ENCODE measurements at regions of chr9 and their contacts with region 1.

Region 1: DNA sequence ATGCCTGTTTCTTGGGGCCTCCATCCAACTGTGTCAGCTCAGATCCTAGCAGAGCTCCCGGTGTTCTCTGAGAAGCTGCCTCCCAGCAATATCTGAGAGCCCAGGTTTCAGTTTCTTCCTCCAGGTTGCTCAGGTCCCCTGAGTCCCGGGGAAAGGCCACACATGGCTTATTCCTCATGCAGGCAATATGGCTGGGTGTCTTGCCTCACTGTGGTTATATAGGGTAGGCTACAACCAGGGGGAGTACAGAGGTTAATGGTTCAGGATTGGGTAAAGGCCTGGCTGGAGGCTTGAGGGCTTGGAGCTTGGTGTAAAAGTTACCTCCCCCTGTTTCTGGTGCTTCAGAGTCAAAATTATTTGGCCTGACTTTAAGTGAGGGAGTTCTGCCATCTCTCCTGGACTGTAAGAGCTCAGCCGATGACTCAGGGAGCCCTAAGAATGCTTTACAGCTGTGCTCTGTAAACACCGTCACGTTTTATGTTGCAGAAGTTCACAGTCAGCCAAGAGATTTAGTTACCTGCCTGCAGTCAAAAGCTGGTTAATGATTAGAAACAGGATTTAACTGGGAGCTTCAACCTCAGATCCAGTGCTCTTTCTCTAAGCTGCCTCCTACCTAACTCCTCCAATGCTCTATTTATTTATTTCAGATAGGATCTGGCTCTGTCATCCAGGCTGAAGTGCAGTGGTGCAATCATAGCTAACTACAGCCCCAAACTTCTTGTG is 24.3 kb upstream of the UBAP2 start:
- DNase-seq: peak in 1 of 2 experiments; percentile 49
- H3K4me3 ChIP-seq: no peak overlapping the region
- H3K27ac ChIP-seq: peak overlapping the region; percentile 49
- H3K4me1 ChIP-seq: peaks cover 0 to 11% (median 5%) of the 10 kb centered on the region in 4 experiments; a peak in 5 of 7 replicates
- H3K27me3 ChIP-seq: no peaks in the 10 kb centered on the region
- CTCF ChIP-seq: no peak
- EP300 ChIP-seq: no peak
- POLR2A ChIP-seq: no peak
- RAD21 ChIP-seq: no peak

Region 2: DNA sequence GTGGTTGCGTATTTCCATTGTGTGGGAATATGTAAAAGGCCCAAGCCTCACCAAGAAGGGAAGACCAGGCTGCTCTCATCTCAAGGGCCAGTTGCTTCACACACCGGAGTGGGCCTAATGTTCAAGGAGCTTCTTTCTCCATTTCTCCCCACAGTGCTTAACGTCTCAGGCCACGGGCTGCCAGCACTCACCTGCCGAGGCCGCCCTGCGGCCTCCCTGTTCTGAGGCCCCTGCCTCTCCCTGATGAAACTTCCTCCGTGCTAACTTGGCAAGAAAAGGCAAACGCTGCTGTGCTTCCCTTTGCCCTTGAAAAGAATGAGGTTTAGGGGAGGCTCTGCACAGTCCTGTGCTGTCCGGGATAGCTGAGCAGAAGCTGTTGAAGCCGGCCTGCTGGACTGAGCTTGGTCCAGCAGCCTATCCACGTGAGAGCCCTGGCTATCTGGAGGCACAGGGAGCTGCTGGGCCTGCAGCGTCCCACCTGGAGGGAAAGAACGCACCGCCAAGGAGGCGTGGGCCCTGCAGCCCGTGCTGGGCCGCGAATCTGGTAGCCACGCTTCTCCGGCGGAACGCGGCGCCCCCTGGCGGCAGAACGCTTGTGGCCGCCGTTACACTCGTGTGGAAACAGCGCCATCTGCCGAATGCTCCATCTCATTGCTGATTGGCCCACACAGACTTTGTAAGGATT is 351.2 kb before region 1 on chr9:
- CTCF ChIA-PET with region 1: no interaction called
- POLR2A ChIA-PET with region 1: no interaction called
- DNase-seq: peak; percentile 61 to 98
- H3K4me3 ChIP-seq: no peak overlapping the region
- H3K27ac ChIP-seq: no peak overlapping the region
- H3K4me1 ChIP-seq: peaks cover 0 to 1% (median 0%) of the 10 kb centered on the region in 4 experiments; a peak in 2 of 7 replicates
- H3K27me3 ChIP-seq: peaks cover 0 to 5% (median 3%) of the 10 kb centered on the region in 4 experiments; a peak in 3 of 7 replicates
- CTCF ChIP-seq: peak; percentile 97 to 100 (median 100)
- EP300 ChIP-seq: no peak
- POLR2A ChIP-seq: no peak
- RAD21 ChIP-seq: peak; percentile 98

Region 3: DNA sequence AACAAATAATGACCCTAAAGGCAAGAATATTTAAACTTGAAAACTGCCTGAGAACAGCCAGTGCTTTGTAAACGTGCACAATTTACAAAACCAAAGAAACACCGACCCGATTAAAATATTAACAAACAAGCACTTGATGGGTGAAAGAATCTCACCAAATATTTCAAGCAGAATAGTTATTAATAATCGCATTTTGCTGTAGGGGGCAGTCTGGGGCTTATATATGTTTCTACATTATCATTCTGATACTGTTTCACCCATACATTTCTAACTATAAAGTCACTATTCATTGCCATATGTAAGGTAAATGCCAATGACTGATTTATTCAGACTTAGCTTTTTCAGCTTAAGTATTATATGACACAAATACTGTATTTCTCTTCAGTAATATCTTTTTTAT is 62.0 kb before region 1 on chr9:
- CTCF ChIA-PET with region 1: interaction called, 11 read pairs
- POLR2A ChIA-PET with region 1: no interaction called
- DNase-seq: no peak
- H3K4me3 ChIP-seq: no peak overlapping the region
- H3K27ac ChIP-seq: no peak overlapping the region
- H3K4me1 ChIP-seq: no peaks in the 10 kb centered on the region
- H3K27me3 ChIP-seq: no peaks in the 10 kb centered on the region
- CTCF ChIP-seq: no peak
- EP300 ChIP-seq: no peak
- POLR2A ChIP-seq: no peak
- RAD21 ChIP-seq: 0 out of 4 replicates have a peak, but pooled peaks of 1 of the 2 experiments have one; percentile 4

Region 4: GRCh38 chr9:34032631-34033030 is 40.4 kb before region 1 on chr9:
- CTCF ChIA-PET with region 1: interaction called, 11 read pairs
- POLR2A ChIA-PET with region 1: interaction called, 3 read pairs
- DNase-seq: no peak
- H3K4me3 ChIP-seq: no peak overlapping the region
- H3K27ac ChIP-seq: no peak overlapping the region
- H3K4me1 ChIP-seq: no peaks in the 10 kb centered on the region
- H3K27me3 ChIP-seq: no peaks in the 10 kb centered on the region
- CTCF ChIP-seq: no peak
- EP300 ChIP-seq: no peak
- POLR2A ChIP-seq: no peak
- RAD21 ChIP-seq: no peak

Region 5: DNA sequence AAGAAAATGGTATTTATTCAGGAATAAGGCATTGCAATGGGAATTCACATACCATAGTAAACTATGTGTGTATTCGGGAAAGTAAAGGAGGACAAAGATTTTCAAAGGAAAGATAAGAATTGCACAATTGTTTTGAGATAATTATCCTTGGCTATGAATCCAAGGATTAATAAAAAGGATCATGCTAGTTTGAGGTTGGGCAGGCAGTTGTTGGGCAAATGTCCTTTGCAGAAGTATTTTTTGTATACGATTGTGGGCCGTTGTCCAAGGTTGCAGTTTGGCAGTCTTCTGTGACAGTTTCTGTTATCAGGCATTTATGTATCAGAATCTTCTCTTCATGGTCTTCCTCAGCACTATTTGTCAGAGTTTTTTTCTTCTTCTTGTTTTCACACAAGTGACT is 13.7 kb before region 1 on chr9:
- CTCF ChIA-PET with region 1: interaction called, 11 read pairs
- POLR2A ChIA-PET with region 1: interaction called, 3 read pairs
- DNase-seq: no peak
- H3K4me3 ChIP-seq: no peak overlapping the region
- H3K27ac ChIP-seq: no peak overlapping the region
- H3K4me1 ChIP-seq: no peaks in the 10 kb centered on the region
- H3K27me3 ChIP-seq: no peaks in the 10 kb centered on the region
- CTCF ChIP-seq: no peak
- EP300 ChIP-seq: no peak
- POLR2A ChIP-seq: no peak
- RAD21 ChIP-seq: no peak

Region 6: DNA sequence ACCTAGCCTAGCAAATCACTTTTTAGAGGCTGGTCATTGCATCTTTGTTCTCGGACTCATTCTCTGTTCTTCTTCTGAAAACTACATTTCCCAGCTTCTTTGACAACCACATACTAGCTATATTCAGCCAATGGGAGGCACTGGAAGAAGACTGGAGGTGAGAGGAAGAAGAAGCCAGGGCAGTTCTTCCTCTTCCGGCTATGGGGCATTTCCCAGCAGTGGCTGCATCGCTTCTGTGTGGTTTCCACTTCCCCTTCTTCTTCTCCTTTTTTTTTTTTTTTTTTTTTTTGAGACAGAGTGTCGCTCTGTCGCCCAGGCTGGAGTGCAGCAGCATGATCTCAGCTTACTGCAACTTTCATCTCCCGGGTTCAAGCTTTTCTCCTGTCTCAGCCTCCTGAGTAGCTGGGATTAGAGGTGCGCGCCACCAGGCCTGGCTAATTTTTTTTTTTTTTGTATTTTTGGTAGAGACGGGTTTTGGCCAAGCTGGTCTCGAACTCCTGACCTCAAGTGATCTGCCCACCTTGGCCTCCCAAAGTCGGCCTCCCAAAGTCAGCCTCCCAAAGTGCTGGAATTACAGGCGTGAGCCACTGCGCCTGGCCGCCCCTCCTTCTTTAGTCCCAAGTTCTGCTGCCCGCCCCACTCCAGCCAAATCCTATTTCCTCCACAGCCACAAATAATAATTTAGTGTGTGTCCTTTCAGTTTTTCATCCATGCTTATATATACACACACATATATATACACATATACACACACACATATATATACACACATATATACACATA is 98.9 kb after region 1 on chr9:
- CTCF ChIA-PET with region 1: no interaction called
- POLR2A ChIA-PET with region 1: no interaction called
- DNase-seq: no peak
- H3K4me3 ChIP-seq: no peak overlapping the region
- H3K27ac ChIP-seq: no peak overlapping the region
- H3K4me1 ChIP-seq: no peaks in the 10 kb centered on the region
- H3K27me3 ChIP-seq: no peaks in the 10 kb centered on the region
- CTCF ChIP-seq: no peak
- EP300 ChIP-seq: no peak
- POLR2A ChIP-seq: no peak
- RAD21 ChIP-seq: no peak